Activated CD4-positive, alpha-beta T cell treated with anti-CD3 and anti-CD28 coated beads, Interleukin-2, amount 10 ng/mL, durations not matched to agents 24 days and 14 days (primary cell): ENCODE measurements at regions of chr1 and their contacts with region 1.

Region 1: GRCh38 chr1:87131809-87132283 is 196.8 kb upstream of the LMO4 start:
- DNase-seq: peak; percentile 92
- H3K4me3 Mint-ChIP-seq: peak overlapping the region; percentile 82
- H3K27ac Mint-ChIP-seq: no peak overlapping the region
- H3K4me1 Mint-ChIP-seq: peaks cover 5% of the 10 kb centered on the region
- H3K27me3 Mint-ChIP-seq: peaks cover 46% of the 10 kb centered on the region

Region 2: DNA sequence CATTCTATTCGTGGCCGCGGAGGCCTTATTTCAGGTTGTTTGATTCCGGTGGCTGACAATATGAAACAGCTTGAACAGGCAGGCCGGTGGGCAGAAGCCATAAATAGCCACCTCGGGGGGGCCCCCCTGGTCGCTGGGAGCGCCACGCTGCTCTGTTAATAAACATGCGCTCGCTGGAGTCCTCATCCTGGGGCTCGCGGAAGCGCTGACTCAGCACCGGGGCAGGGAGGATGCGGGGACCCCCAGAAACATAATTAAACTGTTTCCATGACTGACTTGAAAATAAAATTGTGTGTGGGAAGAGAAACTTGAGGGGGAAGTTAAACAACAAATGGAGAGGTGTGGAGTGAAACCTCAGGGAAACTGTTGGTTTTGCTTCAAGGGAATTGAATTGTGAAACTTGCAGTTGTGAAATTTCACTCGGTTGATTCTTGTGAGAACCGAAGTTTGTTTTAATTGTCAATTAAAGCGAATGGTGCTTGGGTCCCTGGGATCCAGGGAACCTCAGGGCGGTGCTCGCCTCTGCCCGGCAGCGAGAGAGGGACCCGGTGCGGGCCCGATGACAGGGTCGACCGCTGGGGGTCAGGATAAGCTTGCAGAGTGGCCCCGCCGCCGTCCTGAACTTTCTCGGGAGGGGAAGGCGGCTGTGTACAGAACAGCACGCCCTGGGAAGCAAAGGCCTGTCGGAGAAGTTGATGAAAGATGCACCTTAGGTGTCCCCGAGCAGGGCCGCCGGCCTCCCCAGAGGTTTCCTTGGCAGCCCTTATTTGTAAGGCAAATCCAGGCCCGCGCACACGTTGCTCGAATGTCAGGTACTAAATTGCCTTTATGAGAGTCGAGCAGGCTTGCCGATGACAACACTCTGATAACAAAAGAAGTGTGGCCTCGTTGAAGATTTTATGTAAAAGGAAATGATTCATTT is 19.9 kb after region 1 on chr1:
- intact Hi-C with region 1: loop called (anchors 2 kb)
- DNase-seq: peak; percentile 71
- H3K4me3 Mint-ChIP-seq: peak overlapping the region; percentile 79
- H3K27ac Mint-ChIP-seq: peak overlapping the region; percentile 56
- H3K4me1 Mint-ChIP-seq: peaks cover 14% of the 10 kb centered on the region
- H3K27me3 Mint-ChIP-seq: peaks cover 51% of the 10 kb centered on the region

Region 3: DNA sequence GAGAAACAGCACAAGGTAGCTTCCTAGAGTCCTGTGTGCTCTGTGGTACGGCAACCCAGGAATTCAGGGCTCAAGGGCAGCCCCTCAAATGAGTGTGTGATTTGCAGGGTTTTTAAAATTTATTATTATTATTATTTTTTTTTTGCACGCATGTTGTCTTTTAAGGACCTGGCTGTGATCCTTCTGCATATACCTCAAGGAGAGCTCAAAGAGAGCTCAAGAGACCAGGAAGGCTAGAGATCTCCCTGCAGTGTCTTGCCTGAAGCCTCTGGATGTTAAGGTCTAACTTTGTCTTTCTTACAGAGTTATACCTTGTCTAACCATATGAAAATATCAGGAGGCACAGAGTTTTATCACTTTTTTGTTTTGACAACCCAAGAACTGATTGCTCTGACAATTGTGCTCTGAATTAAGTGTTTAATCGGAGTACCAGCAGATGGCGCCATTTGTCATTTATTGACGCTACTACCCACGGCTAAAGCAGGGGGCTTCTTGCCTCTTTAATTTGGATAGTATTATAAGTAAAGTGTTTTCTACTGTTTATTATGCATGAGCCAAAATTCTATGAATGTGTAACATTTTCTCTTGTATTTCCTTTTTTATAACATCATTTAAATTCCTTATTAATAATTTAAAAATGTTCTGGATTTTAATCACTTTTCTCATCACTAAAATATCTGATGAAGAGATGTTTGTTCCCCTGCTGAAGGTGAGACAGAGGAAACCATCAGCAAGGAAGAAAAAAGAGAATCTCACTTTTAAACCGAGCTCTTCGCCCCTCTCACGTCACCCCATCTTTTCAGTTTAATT is 161.0 kb after region 1 on chr1:
- intact Hi-C with region 1: loop called (anchors 5 kb)
- DNase-seq: peak; percentile 85
- H3K4me3 Mint-ChIP-seq: no peak overlapping the region
- H3K27ac Mint-ChIP-seq: no peak overlapping the region
- H3K4me1 Mint-ChIP-seq: no peaks in the 10 kb centered on the region
- H3K27me3 Mint-ChIP-seq: peaks cover 4% of the 10 kb centered on the region

Region 4: GRCh38 chr1:87953732-87954344 is 822.0 kb after region 1 on chr1:
- intact Hi-C with region 1: loop called (anchors 2 kb)
- DNase-seq: peak; percentile 83
- H3K4me3 Mint-ChIP-seq: no peak overlapping the region
- H3K27ac Mint-ChIP-seq: no peak overlapping the region
- H3K4me1 Mint-ChIP-seq: no peaks in the 10 kb centered on the region
- H3K27me3 Mint-ChIP-seq: peaks cover 6% of the 10 kb centered on the region